Calu3 (cell line): ENCODE measurements at regions of chr15 and their contacts with region 1.

Region 1: GRCh38 chr15:92724144-92724543 is 68.6 kb upstream of the FAM174B start:
- DNase-seq: no peak
- H3K4me3 Mint-ChIP-seq: no peak overlapping the region
- H3K27ac Mint-ChIP-seq: no peak overlapping the region
- H3K4me1 Mint-ChIP-seq: no peaks in the 10 kb centered on the region
- H3K27me3 Mint-ChIP-seq: peaks cover 28% of the 10 kb centered on the region
- CTCF ChIP-seq: no peak

Region 2: GRCh38 chr15:92377083-92377789 is 346.9 kb before region 1 on chr15:
- CTCF ChIA-PET with region 1: interaction called, 11 read pairs
- intact Hi-C with region 1: no loop called
- DNase-seq: no peak
- H3K4me3 Mint-ChIP-seq: no peak overlapping the region
- H3K27ac Mint-ChIP-seq: no peak overlapping the region
- H3K4me1 Mint-ChIP-seq: no peaks in the 10 kb centered on the region
- H3K27me3 Mint-ChIP-seq: peaks cover 83% of the 10 kb centered on the region
- CTCF ChIP-seq: no peak